Breast epithelium (tissue), 4 donors: ENCODE measurements at regions of chr1 and their contacts with region 1.

Region 1: GRCh38 chr1:35702508-35702907 is 16.2 kb downstream of the C1orf216 start:
- DNase-seq: no peak
- H3K4me3 ChIP-seq: no peak overlapping the region
- H3K27ac ChIP-seq: no peak overlapping the region
- H3K4me1 ChIP-seq: no peaks in the 10 kb centered on the region
- H3K27me3 ChIP-seq: peaks cover 0 to 26% of the 10 kb centered on the region in 2 donors
- CTCF ChIP-seq: no peak
- POLR2A ChIP-seq: no peak

Region 2: GRCh38 chr1:34164771-34165391 is 1537.6 kb before region 1 on chr1 and contains the start of gene CSMD2:
- intact Hi-C with region 1: loop called (anchors 5 kb)
- DNase-seq: no peak
- H3K4me3 ChIP-seq: peak within 1 kb of the TSS; percentile 43 to 66 (median 46)
- H3K27ac ChIP-seq: no peak within 1 kb of the TSS
- H3K4me1 ChIP-seq: peaks cover 8% of the 10 kb centered on the region in 2 donors
- H3K27me3 ChIP-seq: peaks cover 0 to 58% of the 10 kb centered on the region in 2 donors
- CTCF ChIP-seq: no peak
- POLR2A ChIP-seq: no peak
- total RNA-seq, gene CSMD2: 0.33 to 2.6 (median 0.44) TPM